ENCODE measurements at regions of chr6 and their contacts with region 1.

Region 1: GRCh38 chr6:30405934-30406333 is 61.0 kb downstream of the RPP21 start:
- DNase-seq: no peak
- ATAC-seq: no peak
- H3K4me3 ChIP-seq: no peak overlapping the region
- H3K27ac ChIP-seq: no peak overlapping the region
- H3K4me1 ChIP-seq: no peaks in the 10 kb centered on the region
- H3K27me3 ChIP-seq: no peaks in the 10 kb centered on the region

Region 2: GRCh38 chr6:30386166-30386565 is 19.8 kb before region 1 on chr6:
- intact Hi-C with region 1: loop called in 1 of 4 experiments (anchors 2 kb)
- DNase-seq: no peak
- ATAC-seq: no peak
- H3K4me3 ChIP-seq: no peak overlapping the region
- H3K27ac ChIP-seq: no peak overlapping the region
- H3K4me1 ChIP-seq: no peaks in the 10 kb centered on the region
- H3K27me3 ChIP-seq: no peaks in the 10 kb centered on the region